Posterior cingulate gyrus (tissue), 11 donors: ENCODE measurements at regions of chr16 and their contacts with region 1.

Region 1: GRCh38 chr16:4846891-4847773 is at the starts of genes GLYR1 and UBN1:
- DNase-seq: peak; percentile 98 to 100 (median 98)

Region 2: GRCh38 chr16:4693296-4693955 is 153.7 kb before region 1 on chr16 and contains the start of gene NUDT16L1:
- intact Hi-C with region 1: loop called (anchors 10 kb)
- DNase-seq: peak; percentile 89 to 100 (median 96)

Region 3: GRCh38 chr16:4766874-4767628 is 80.1 kb before region 1 on chr16 and contains the start of gene ZNF500:
- intact Hi-C with region 1: loop called (anchors 5 kb)
- DNase-seq: peak; percentile 97 to 100 (median 99)

Region 4: GRCh38 chr16:5033256-5034169 is 186.4 kb after region 1 on chr16 and contains the start of gene NAGPA:
- intact Hi-C with region 1: loop called (anchors 10 kb)
- DNase-seq: peak; percentile 85 to 98 (median 94)